ENCODE measurements at regions of chr3 and their contacts with region 1.

Region 1: DNA sequence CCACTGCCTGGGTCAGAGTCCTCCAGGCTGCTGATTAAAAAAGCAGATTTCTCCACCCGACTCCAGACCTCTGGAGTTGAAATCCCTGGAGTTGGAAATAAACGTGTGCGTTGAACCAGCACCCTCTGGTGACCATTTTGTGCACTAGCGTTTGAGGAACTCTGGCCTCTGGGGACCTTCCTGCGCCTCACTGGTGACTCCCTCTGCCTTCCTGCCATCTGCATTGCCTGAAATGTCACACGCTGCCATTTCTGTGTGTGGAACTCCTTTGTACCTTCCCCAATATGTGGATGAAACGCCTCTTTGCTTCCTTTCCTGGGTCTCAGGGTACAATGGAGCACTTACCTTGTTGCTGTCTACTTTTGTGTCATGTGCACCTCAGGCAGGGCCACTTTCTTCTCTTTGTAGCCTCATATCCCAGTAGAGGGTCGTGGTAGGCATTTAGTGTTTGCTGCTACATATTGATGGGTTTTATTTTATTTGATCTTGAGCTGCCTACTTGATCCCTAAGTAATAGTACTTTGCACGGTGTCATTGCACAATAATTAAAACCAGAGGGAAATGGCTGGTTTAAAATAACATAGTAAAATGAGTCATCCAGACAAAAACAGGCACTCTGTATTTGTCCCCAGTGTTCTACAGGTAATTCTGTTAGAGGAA is 56.8 kb downstream of the GPR171 start:
- DNase-seq: peak; percentile 82
- H3K4me3 ChIP-seq: no peak overlapping the region
- H3K27ac ChIP-seq: no peak overlapping the region
- H3K4me1 ChIP-seq: peaks cover 0 to 7% (median 0%) of the 10 kb centered on the region in 4 donors
- H3K27me3 ChIP-seq: peaks cover 0 to 7% (median 3%) of the 10 kb centered on the region in 3 donors
- CTCF ChIP-seq: peak; percentile 64 to 85 (median 80)
- EP300 ChIP-seq: no peak
- POLR2A ChIP-seq: no peak

Region 2: DNA sequence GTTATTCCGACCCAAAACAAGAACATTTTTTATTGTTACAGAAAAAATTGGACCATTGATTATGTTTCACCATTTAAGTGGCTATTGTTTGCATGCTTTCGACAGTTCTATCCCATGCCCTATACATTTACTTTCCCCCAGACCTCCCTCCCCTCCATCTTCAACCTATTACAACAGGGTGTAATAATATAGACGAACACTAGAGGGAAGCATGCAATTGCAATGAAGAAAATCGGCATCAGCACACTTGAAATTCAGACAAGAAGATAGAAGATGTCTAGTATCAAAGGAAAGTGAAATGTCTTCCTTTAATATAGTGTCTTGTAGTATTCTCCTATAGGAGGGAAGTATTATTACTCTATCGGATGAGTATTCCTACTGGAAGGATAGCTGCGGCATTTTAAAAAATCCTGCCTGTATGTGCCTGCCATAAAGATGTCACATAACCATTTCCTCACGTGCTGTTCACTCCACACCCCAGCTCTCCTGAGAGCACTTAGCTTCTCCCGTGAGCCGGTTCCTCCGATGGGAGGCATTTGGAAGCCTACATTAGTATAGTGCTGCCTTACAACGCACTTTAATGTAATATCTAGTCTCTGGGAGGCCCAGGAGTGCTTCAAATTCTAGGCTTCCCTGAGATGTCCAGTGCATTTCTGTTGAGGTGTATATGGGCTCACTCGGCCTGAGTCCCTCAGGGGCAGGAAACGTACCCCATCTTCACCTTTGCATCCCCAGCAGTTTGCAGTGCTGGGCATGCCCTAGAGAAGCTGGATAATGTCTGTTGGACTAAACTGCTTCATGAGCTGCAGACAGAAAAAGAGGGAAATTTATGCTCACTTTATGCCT is 424.7 kb before region 1 on chr3:
- intact Hi-C with region 1: loop called (anchors 1 kb)
- DNase-seq: no peak
- H3K4me3 ChIP-seq: peak overlapping the region in 2 of 4 donors; percentile 16 to 25
- H3K27ac ChIP-seq: no peak overlapping the region
- H3K4me1 ChIP-seq: peaks cover 0 to 6% (median 4%) of the 10 kb centered on the region in 4 donors
- H3K27me3 ChIP-seq: no peaks in the 10 kb centered on the region
- CTCF ChIP-seq: peak; percentile 74 to 87 (median 82)
- EP300 ChIP-seq: no peak
- POLR2A ChIP-seq: no peak

Region 3: GRCh38 chr3:150787741-150788370 is 358.3 kb before region 1 on chr3:
- intact Hi-C with region 1: loop called (anchors 1 kb)
- DNase-seq: peak; percentile 87
- H3K4me3 ChIP-seq: no peak overlapping the region
- H3K27ac ChIP-seq: no peak overlapping the region
- H3K4me1 ChIP-seq: no peaks in the 10 kb centered on the region
- H3K27me3 ChIP-seq: no peaks in the 10 kb centered on the region
- CTCF ChIP-seq: peak; percentile 68 to 82 (median 75)
- EP300 ChIP-seq: no peak
- POLR2A ChIP-seq: no peak

Region 4: GRCh38 chr3:150925751-150926201 is 220.4 kb before region 1 on chr3:
- intact Hi-C with region 1: loop called (anchors 5 kb)
- DNase-seq: no peak
- H3K4me3 ChIP-seq: no peak overlapping the region
- H3K27ac ChIP-seq: no peak overlapping the region
- H3K4me1 ChIP-seq: peaks cover 0 to 5% (median 2%) of the 10 kb centered on the region in 4 donors
- H3K27me3 ChIP-seq: no peaks in the 10 kb centered on the region
- CTCF ChIP-seq: peak in 3 of 4 experiments; percentile 28 to 37 (median 36)
- EP300 ChIP-seq: no peak
- POLR2A ChIP-seq: no peak

Region 5: DNA sequence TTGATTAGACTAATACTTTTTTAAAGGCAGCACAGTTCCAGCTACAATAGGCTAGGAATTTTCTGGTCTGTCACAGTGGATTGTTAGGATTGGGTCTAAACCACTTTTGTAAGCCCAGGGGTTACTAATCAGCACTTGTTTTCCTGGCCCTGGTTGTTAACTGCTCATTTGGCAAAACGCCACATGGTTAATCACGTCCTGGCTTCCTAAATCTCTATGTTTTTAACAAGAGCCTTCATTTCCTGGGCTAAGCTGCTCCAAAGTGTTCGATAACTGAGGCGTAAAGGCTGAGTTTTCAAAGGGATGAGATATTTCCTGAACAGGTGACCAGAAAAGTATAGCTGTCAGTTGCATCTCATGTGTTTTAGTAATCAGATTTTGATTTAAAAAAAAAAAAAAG is 134.8 kb before region 1 on chr3:
- intact Hi-C with region 1: loop called (anchors 5 kb)
- DNase-seq: no peak
- H3K4me3 ChIP-seq: no peak overlapping the region
- H3K27ac ChIP-seq: no peak overlapping the region
- H3K4me1 ChIP-seq: peaks cover 0 to 21% (median 14%) of the 10 kb centered on the region in 4 donors
- H3K27me3 ChIP-seq: peaks cover 0 to 5% (median 0%) of the 10 kb centered on the region in 3 donors
- CTCF ChIP-seq: no peak
- EP300 ChIP-seq: no peak
- POLR2A ChIP-seq: no peak